ENCODE measurements at regions of chr7 and their contacts with region 1.

Region 1: DNA sequence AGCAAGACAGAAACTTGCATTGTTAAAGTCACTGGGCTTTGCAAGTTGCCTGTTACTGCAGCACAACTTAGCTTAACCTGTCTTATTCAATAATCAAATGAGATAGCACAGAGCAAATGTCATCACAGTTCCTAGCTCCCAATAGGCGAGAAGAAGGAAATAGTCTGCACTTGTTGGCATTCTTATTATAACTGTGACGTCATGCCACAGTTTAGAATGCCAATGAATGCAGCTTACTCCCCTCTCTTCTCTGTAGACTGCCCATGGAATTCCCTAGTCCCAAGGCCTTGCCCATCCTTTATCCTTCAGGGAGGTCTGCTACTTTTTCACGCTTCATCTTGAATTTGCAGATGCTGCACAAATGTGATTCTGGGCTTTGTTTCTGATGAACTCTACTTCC is 1094.9 kb upstream of the AUTS2 start:
- DNase-seq: no peak
- ATAC-seq: no peak
- H3K4me3 ChIP-seq: no peak overlapping the region
- H3K27ac ChIP-seq: no peak overlapping the region
- H3K4me1 ChIP-seq: no peaks in the 10 kb centered on the region
- H3K27me3 ChIP-seq: no peaks in the 10 kb centered on the region
- CTCF ChIP-seq: no peak
- POLR2A ChIP-seq: no peak
- RAD21 ChIP-seq: no peak

Region 2: GRCh38 chr7:67990003-67990402 is 513.4 kb before region 1 on chr7:
- CTCF ChIA-PET with region 1: no interaction called
- POLR2A ChIA-PET with region 1: no interaction called
- dilution Hi-C with region 1: no loop called
- in situ Hi-C with region 1: no loop called
- intact Hi-C with region 1: no loop called
- DNase-seq: no peak
- ATAC-seq: no peak
- H3K4me3 ChIP-seq: no peak overlapping the region
- H3K27ac ChIP-seq: no peak overlapping the region
- H3K4me1 ChIP-seq: no peaks in the 10 kb centered on the region
- H3K27me3 ChIP-seq: no peaks in the 10 kb centered on the region
- CTCF ChIP-seq: no peak
- POLR2A ChIP-seq: no peak
- RAD21 ChIP-seq: no peak

Region 3: GRCh38 chr7:68918621-68919020 is 415.2 kb after region 1 on chr7:
- CTCF ChIA-PET with region 1: no interaction called
- POLR2A ChIA-PET with region 1: interaction called, 12 read pairs
- dilution Hi-C with region 1: no loop called
- in situ Hi-C with region 1: no loop called
- intact Hi-C with region 1: no loop called
- DNase-seq: no peak
- ATAC-seq: no peak
- H3K4me3 ChIP-seq: no peak overlapping the region
- H3K27ac ChIP-seq: no peak overlapping the region
- H3K4me1 ChIP-seq: no peaks in the 10 kb centered on the region
- H3K27me3 ChIP-seq: no peaks in the 10 kb centered on the region
- CTCF ChIP-seq: no peak
- POLR2A ChIP-seq: no peak
- RAD21 ChIP-seq: no peak

Measured in IMR-90 (cell line).